Heart left ventricle (tissue), 16 donors: ENCODE measurements at regions of chr10 and their contacts with region 1.

Region 1: GRCh38 chr10:112183329-112184051 is at the start of gene GPAM:
- DNase-seq: peak; percentile 93 to 98 (median 95)
- ATAC-seq: peak; percentile 96 to 99 (median 98)
- H3K4me3 ChIP-seq: peak within 1 kb of the TSS; percentile 70 to 96 (median 85)
- H3K27ac ChIP-seq: peak within 1 kb of the TSS in 11 of 12 donors; percentile 65 to 84 (median 73)
- H3K4me1 ChIP-seq: peaks cover 0 to 29% (median 15%) of the 10 kb centered on the region in 12 donors
- H3K27me3 ChIP-seq: no peaks in the 10 kb centered on the region
- CTCF ChIP-seq: peak in 1 of 12 donors; percentile 23
- POLR2A ChIP-seq: peak in 1 of 2 donors; percentile 71
- total RNA-seq, gene GPAM: 8.7 to 104 (median 16.9) TPM

Region 2: GRCh38 chr10:112045938-112046337 is 137.6 kb before region 1 on chr10:
- intact Hi-C with region 1: no loop called
- DNase-seq: no peak
- ATAC-seq: no peak
- H3K4me3 ChIP-seq: no peak overlapping the region
- H3K27ac ChIP-seq: no peak overlapping the region
- H3K4me1 ChIP-seq: no peaks in the 10 kb centered on the region
- H3K27me3 ChIP-seq: no peaks in the 10 kb centered on the region
- CTCF ChIP-seq: no peak
- POLR2A ChIP-seq: no peak

Region 3: GRCh38 chr10:112140110-112140970 is 43.1 kb before region 1 on chr10:
- intact Hi-C with region 1: no loop called
- DNase-seq: peak in 4 of 5 donors; percentile 36 to 62 (median 48)
- ATAC-seq: peak; percentile 43 to 78 (median 73)
- H3K4me3 ChIP-seq: no peak overlapping the region
- H3K27ac ChIP-seq: no peak overlapping the region
- H3K4me1 ChIP-seq: peaks cover 0 to 4% (median 0%) of the 10 kb centered on the region in 12 donors
- H3K27me3 ChIP-seq: no peaks in the 10 kb centered on the region
- CTCF ChIP-seq: peak; percentile 58 to 85 (median 74)
- POLR2A ChIP-seq: no peak

Region 4: GRCh38 chr10:112295853-112296830 is 112.7 kb after region 1 on chr10:
- intact Hi-C with region 1: loop called in 4 of 10 experiments (anchors 5 to 10 kb)
- DNase-seq: peak in 4 of 5 donors; percentile 53 to 85 (median 66)
- ATAC-seq: peak; percentile 92 to 97 (median 94)
- H3K4me3 ChIP-seq: no peak overlapping the region
- H3K27ac ChIP-seq: peak overlapping the region in 8 of 12 donors; percentile 6 to 78 (median 38)
- H3K4me1 ChIP-seq: peaks cover 0 to 26% (median 6%) of the 10 kb centered on the region in 12 donors
- H3K27me3 ChIP-seq: no peaks in the 10 kb centered on the region
- CTCF ChIP-seq: no peak
- POLR2A ChIP-seq: no peak

Region 5: DNA sequence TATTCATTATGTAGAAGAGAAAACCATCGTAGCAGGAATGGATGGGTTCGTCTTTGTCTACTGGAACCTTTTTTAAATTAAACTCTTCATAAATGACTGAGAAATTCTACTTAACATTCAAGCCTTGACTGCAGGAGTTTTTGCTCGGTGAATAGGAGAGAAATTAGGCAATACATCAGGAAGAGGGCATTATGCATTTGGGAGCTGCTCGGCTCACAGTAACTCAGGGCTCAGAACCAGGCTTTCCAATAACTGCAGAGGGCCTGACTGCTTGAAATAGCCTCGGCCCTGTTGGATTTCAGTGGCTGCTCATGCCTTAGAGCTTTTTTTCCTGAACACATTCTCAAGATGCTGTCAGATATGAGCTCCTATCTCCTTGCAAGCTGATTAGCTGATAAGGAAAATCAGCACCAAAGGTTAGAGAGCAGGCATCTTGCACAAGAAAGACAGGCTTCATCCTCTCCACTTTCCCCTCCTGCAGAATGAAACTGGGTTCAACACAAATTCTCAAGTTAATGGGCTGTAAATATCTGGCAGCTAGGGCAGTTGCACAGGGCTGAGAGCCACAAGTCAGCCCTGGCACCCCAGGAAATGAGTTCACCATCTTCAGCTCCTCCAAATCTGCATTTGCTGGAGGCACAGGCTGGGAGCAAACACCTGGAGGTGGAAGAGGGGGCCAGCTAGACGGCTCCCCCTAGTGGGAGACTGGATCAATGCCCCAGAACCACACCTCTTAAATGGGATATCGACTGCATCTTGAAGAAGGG is 124.1 kb after region 1 on chr10:
- intact Hi-C with region 1: loop called in 6 of 10 experiments (anchors 5 to 10 kb)
- DNase-seq: peak in 2 of 5 donors; percentile 33 to 35
- ATAC-seq: peak in 3 of 4 donors; percentile 59 to 70 (median 65)
- H3K4me3 ChIP-seq: no peak overlapping the region
- H3K27ac ChIP-seq: no peak overlapping the region
- H3K4me1 ChIP-seq: no peaks in the 10 kb centered on the region
- H3K27me3 ChIP-seq: peaks cover 0 to 3% (median 0%) of the 10 kb centered on the region in 9 donors
- CTCF ChIP-seq: peak; percentile 44 to 78 (median 64)
- POLR2A ChIP-seq: no peak

Region 6: DNA sequence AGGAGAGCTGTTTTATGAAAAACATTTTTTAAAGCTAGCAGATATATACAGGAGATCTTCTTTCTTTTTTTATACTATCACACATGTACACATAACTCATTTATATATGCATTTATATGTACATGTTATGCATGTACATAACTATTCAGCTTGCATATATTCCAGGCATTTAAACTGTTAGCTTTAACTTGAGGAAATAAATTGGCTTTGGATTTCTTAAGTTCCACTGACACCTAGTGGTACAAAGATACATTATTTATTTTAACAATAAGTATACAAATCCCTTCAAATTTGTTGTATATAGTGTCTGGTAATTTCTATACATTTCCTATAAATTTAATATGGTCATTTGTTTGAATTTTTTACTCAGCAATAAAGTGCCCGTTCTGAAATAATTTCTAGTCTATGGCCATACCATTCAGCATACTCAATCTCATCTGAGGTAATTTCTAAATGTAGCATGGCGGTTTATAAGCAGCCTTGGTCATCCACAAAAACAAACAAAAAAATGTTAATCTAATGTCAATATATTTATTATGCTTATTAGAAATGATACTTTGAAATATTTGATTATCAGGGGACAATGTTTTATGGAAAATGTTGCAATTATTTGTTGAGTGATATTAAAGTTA is 251.6 kb after region 1 on chr10:
- intact Hi-C with region 1: loop called in 7 of 10 experiments (anchors 2 to 10 kb)
- DNase-seq: no peak
- ATAC-seq: no peak
- H3K4me3 ChIP-seq: no peak overlapping the region
- H3K27ac ChIP-seq: no peak overlapping the region
- H3K4me1 ChIP-seq: no peaks in the 10 kb centered on the region
- H3K27me3 ChIP-seq: no peaks in the 10 kb centered on the region
- CTCF ChIP-seq: peak; percentile 26 to 73 (median 48)
- POLR2A ChIP-seq: no peak

Region 7: DNA sequence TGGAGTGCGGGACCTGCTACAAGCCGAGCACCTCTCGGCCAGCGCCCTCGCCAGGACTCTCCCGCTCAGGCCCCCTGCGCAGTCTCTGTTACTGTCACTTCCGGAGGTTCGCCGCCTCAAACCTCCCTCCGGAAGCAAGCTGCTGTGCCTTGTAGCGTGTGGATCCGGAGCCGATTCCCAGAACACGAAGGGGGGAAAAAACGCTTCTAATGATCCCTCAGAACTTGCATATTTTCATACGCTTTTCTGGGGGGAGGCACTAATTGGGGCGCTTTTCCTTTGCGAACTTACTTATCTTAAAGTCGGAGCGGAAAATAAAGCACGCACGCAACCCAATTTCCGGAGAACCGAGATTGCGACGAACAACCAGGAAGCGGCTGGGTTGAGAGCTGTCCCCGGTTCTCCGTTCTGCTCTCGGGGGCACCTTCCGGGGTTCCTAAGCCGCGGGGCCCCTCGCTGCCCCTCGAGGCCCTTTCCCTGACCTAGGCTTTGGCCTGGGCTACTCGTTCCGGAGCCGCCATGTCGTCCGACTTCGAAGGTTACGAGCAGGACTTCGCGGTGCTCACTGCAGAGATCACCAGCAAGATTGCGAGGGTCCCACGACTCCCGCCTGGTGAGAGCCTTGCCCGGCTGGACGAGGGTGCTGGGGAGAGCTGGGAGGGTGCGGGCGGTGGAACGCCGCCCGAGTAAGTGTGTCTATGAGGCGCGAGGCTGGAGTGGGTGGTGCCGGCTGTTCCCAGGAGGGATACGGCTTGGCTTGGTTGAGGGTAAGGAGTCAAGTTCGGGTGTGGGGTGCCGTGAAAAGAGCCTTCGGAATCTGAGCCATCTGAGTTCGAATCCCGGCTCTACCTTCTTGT is 263.6 kb after region 1 on chr10 and contains the starts of genes VTI1A and ZDHHC6:
- intact Hi-C with region 1: loop called in 3 of 10 experiments (anchors 5 to 10 kb)
- DNase-seq: peak; percentile 84 to 90 (median 89)
- ATAC-seq: peak; percentile 94 to 99 (median 98)
- H3K4me3 ChIP-seq: peak within 1 kb of the TSS; percentile 75 to 100 (median 86)
- H3K27ac ChIP-seq: peak within 1 kb of the TSS; percentile 48 to 97 (median 86)
- H3K4me1 ChIP-seq: peaks cover 0 to 34% (median 25%) of the 10 kb centered on the region in 12 donors
- H3K27me3 ChIP-seq: no peaks in the 10 kb centered on the region
- CTCF ChIP-seq: peak in 4 of 12 donors; percentile 22 to 30 (median 24)
- POLR2A ChIP-seq: no peak
- total RNA-seq, gene VTI1A: 16.8 to 33.1 (median 24.8) TPM
- total RNA-seq, gene ZDHHC6: 10.0 to 20.2 (median 16.5) TPM